Uterus (tissue), 4 donors: ENCODE measurements at regions of chr16 and their contacts with region 1.

Region 1: GRCh38 chr16:30914830-30915229 is 8.5 kb upstream of the FBXL19 start:
- DNase-seq: no peak
- H3K4me3 ChIP-seq: no peak overlapping the region
- H3K27ac ChIP-seq: no peak overlapping the region
- H3K4me1 ChIP-seq: no peaks in the 10 kb centered on the region
- H3K27me3 ChIP-seq: no peaks in the 10 kb centered on the region
- CTCF ChIP-seq: no peak
- POLR2A ChIP-seq: no peak

Region 2: DNA sequence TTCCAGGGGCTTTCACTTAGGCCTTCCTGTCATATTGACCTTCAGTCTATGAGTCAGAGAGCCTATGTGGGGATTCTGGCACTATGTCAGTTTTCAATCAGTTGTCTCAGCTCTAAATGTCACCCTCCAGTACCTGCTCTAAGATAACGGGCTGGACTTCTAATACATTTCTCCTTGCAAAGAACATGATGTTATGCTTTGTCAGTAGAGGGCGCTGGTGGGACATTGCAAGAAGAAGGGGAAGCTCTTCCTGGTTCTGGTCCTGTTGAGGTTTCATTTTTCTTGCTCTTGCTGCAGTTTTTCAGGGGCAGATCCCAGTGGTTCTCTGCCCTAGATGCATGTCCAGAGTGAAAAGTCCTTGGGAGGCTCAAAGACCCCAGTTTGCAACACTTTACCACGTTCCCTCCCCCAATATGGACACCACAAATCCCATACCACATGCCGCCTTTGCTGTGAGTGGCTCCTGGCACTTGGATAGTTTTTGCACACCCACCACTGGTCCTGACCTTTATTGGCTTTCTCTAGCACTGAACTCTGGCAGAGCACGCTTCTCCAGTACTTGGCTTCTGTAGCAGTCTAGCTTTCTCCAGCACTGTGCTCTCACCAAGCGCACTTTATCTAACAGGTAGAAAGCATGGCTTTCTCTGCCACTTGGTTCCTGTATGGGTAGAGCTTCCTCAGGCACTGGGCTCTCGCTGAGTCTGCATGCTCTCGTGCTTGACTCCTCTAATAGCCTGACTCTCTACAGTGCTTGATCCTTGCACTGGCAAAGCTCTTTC is 70.0 kb before region 1 on chr16:
- intact Hi-C with region 1: loop called (anchors 5 kb)
- DNase-seq: peak; percentile 66 to 87
- H3K4me3 ChIP-seq: no peak overlapping the region
- H3K27ac ChIP-seq: peak overlapping the region; percentile 24 to 40
- H3K4me1 ChIP-seq: no peaks in the 10 kb centered on the region
- H3K27me3 ChIP-seq: no peaks in the 10 kb centered on the region
- CTCF ChIP-seq: peak; percentile 77 to 93 (median 89)
- POLR2A ChIP-seq: no peak

Region 3: DNA sequence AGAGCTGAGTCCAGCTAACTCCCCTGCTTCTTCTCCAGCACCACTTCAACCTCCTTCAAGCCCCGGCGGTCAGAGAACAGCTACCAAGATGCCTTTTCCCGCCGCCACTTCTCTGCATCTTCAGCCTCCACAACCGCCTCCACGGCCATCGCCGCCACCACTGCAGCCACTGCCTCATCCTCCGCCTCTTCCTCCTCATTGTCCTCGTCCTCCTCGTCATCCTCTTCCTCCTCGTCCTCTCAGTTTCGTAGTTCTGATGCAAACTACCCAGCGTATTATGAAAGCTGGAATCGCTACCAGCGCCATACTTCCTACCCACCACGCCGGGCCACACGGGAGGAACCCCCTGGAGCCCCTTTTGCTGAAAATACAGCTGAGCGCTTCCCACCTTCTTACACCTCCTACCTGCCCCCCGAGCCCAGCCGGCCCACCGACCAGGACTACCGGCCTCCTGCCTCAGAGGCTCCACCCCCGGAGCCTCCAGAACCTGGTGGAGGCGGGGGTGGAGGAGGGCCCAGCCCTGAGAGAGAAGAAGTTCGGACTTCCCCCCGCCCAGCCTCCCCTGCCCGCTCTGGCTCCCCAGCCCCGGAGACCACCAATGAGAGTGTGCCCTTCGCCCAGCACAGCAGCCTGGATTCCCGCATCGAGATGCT is 49.9 kb after region 1 on chr16:
- intact Hi-C with region 1: no loop called
- DNase-seq: no peak
- H3K4me3 ChIP-seq: no peak overlapping the region
- H3K27ac ChIP-seq: no peak overlapping the region
- H3K4me1 ChIP-seq: no peaks in the 10 kb centered on the region
- H3K27me3 ChIP-seq: no peaks in the 10 kb centered on the region
- CTCF ChIP-seq: no peak
- POLR2A ChIP-seq: no peak